Astrocyte of the cerebellum (primary cell): ENCODE measurements at regions of chr7 and their contacts with region 1.

Region 1: DNA sequence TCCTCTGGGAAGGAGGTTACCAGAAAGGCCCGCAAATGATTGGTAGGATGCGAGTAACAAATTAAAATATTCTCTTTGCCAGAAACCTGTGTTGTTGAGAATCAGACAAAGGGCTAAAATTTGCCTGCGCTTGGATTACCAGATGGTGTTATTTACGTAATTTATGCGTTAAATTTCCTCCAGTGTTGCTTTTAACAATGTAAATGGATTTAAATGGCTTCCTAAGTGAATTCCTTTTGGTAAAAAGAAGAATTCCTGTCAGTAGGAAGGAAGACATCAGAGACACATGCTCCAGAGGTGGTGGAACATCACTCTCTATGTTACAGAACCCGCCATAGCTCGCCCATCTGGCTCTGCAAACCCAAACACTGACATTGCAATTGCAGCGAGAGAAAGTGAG is 520.6 kb downstream of the GALNT17 start:
- DNase-seq: no peak
- H3K4me3 ChIP-seq: no peak overlapping the region
- CTCF ChIP-seq: no peak

Region 2: GRCh38 chr7:71308096-71308495 is 344.4 kb before region 1 on chr7:
- in situ Hi-C with region 1: loop called (anchors 10 kb)
- DNase-seq: peak; percentile 69
- H3K4me3 ChIP-seq: no peak overlapping the region
- CTCF ChIP-seq: no peak

Region 3: DNA sequence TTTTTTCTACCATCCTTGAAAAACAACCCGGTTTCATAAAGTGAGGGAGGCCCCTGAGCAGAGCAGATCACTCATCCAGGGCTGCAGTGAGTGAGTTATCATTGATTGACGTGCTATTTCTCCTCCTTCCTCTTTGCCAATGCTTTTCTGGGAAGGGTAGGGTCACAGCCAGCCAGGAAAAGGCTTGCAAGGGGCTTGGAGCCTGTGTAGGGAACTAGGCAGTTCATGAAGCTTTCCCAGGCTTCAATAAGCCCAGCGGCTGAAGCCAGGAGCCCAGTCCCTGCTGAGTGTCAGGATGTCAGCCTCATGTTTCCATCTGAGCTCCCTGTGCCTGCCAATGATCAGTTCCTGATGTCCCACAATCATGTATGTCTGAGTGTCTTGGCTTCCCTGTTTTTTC is 64.2 kb after region 1 on chr7:
- in situ Hi-C with region 1: no loop called
- DNase-seq: no peak
- H3K4me3 ChIP-seq: no peak overlapping the region
- CTCF ChIP-seq: no peak